ENCODE measurements at regions of chr19 and their contacts with region 1.

Region 1: DNA sequence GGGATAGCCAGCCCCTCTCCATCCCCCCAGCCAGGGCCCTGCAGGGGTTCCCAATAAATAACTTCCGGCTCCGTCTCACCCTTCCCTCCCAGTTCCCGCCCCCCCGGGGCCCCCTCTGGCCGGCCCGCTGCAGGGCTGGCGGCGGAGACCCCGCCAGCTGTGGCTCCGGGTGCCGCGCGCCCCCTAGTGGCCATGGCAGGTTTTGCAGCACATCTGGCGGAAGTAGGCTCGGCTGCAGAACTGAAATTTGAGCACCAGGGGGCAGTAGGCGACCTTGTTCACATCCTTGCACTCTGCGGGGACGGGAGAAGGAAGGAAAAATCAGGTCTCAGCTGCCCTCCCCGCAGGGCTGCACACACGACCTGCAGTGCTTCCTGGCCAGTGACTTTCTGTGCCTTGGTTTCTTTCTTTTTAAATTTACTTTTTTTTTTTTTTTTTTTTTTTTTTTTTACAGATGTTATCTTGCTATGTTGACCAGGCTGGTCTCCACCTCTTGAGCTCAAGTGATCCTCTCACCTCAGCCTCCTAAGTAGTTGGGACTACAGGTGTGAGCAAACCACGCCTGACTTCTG is 3.6 kb upstream of the MYO1F start:
- DNase-seq: peak; percentile 63
- ATAC-seq: peak; percentile 71
- H3K4me3 ChIP-seq: no peak overlapping the region; a peak in 1 of 6 replicates
- H3K27ac ChIP-seq: no peak overlapping the region
- H3K4me1 ChIP-seq: peaks cover 40% of the 10 kb centered on the region
- H3K27me3 ChIP-seq: peaks cover 0 to 11% of the 10 kb centered on the region in 2 experiments; a peak in 2 of 5 replicates
- CTCF ChIP-seq: peak; percentile 95
- EP300 ChIP-seq: no peak
- POLR2A ChIP-seq: no peak
- RAD21 ChIP-seq: peak; percentile 92

Region 2: DNA sequence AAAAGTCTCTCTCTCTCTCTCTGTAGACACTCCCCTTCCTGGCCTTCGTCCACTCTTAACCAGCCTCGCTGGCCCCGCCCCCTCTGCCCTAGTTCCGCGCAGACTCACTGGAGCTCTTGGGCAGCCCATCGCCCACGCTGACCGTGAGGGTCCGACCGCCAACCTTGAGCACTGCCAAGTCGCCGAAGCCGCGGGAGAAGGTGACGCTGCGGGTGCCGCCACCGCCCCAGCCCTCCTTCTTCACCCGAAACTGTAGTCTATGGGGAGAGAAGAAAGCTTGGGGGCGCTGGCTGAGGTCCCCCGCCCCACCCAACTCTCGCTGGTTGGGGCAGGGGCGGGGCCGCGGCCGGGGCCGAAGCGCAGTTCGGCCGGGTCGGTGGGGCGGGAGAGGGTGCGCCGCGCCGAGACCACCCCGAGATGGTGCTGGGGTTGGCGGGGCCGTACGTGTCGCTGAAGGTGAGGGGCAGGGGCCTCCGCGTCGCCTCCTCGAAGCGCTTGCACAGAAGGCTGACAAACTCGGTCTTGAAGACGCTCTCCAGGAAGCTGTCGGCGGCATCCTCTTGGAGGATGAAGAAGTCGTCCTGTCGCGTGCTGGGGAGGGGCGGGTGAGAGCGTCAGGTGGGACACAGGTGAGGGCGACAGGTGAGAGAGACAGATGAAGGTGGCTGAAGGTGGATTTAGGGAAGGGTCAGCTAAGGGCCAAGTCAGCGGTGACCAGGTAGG is 54.3 kb before region 1 on chr19:
- CTCF ChIA-PET with region 1: no interaction called
- POLR2A ChIA-PET with region 1: no interaction called
- in situ Hi-C with region 1: no loop called
- intact Hi-C with region 1: loop called (anchors 10 kb)
- DNase-seq: peak; percentile 87
- ATAC-seq: peak; percentile 81
- H3K4me3 ChIP-seq: peak overlapping the region; percentile 60 to 78 (median 70)
- H3K27ac ChIP-seq: peak overlapping the region; percentile 77
- H3K4me1 ChIP-seq: peaks cover 24% of the 10 kb centered on the region
- H3K27me3 ChIP-seq: no peaks in the 10 kb centered on the region
- CTCF ChIP-seq: no peak
- EP300 ChIP-seq: no peak
- POLR2A ChIP-seq: peak in 1 of 2 experiments; percentile 92; a peak in 3 of 4 replicates
- RAD21 ChIP-seq: 0 out of 2 replicates have a peak, but pooled peaks have one; percentile 6

Region 3: DNA sequence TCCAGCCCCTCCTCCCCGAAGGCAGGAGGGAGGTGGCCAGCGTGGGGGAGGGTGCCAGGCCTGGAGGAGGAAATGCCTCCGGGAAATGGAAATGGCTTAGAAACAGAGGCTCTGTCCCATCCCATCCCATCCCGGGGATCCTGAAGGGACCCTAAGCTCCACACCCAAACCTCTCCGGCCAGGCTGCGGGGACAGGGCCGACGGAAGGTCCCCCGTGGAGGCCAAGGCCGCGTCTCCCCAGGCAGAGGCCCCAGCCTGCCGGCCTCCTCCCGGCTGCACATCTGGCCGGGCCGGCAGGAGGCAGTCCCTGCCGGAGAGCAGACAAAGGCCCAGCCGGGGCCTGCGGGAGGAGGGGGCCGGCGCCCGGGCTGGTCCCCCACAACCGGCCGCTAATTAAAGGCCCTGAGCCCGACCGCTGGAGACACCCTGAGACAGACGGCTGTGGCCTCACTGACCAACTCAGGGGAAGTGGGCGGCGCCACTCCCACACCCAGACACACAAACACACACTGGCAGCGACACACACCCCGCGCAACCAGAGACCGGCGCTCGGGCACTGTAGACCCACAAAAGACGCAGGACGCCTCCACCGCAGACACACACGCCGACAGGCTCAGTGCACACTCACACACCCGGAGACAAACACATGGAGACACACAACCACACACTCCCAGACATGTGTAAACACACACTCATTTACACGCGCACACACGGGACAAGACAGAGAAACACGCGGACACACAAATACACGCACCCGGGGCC is 28.7 kb after region 1 on chr19:
- CTCF ChIA-PET with region 1: no interaction called
- POLR2A ChIA-PET with region 1: no interaction called
- in situ Hi-C with region 1: no loop called
- intact Hi-C with region 1: no loop called
- DNase-seq: peak; percentile 32
- ATAC-seq: peak; percentile 86
- H3K4me3 ChIP-seq: peak overlapping the region; percentile 55 to 75 (median 72)
- H3K27ac ChIP-seq: no peak overlapping the region
- H3K4me1 ChIP-seq: peaks cover 15% of the 10 kb centered on the region
- H3K27me3 ChIP-seq: peaks cover 0 to 7% of the 10 kb centered on the region in 2 experiments; a peak in 2 of 5 replicates
- CTCF ChIP-seq: peak; percentile 51
- EP300 ChIP-seq: no peak
- POLR2A ChIP-seq: no peak
- RAD21 ChIP-seq: peak; percentile 45

Measured in HepG2 (cell line).